ENCODE measurements at regions of chr6 and their contacts with region 1.

Region 1: DNA sequence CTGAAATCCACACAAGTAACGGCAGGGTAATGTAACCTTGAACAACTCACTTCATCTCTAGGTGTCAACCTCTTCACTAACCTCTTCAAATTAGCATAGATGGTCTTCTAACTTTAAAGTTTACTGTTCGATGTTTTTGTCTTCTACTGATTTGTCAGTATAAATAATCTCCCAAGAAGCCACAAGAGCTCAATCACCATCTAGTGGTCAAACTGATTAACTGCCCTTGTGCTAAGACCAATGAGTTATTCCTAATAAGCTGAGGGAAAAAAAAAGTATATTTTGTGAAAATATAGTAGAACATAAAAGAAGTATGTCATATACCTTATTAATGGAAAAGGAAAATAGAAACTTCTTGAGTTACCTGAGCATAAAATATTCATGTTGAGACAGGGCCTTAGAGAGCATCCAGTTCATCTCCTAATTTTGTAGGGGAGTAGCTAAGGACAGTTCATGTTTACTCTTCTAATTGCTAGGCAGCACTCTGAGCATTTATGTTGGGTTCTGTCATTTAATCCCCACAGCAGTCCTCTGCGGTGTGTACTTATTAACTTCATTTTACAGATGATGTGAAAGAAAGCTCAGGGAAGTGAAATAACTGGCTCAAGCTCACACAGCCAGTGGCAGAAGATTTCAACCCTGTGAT is 317.1 kb downstream of the ESR1 start:
- DNase-seq: peak in 1 of 42 donors; percentile 38

Region 2: DNA sequence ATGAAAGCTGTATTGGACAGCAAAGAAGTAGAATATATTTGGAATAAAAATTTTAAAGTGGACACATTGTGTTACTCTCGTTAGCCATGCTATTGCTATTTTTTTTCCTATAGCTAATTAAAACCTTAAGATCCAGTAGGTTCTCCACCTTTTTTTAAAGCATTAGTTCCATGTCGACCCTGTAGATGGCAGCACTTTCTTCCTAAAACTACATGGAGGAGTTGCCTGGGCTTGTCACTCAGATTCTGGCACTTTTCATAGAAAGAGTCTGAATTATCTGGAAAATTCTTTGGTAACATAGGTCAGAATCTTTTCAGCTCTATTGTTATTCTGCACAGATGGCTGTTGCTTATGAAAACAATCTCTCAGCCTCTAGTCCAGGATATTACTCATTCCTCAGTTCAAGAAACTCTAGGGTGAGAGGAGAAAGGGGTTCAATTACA is 359.1 kb before region 1 on chr6:
- intact Hi-C with region 1: loop called (anchors 5 kb)
- DNase-seq: peak in 25 of 42 donors; percentile 16 to 81 (median 54)

Region 3: DNA sequence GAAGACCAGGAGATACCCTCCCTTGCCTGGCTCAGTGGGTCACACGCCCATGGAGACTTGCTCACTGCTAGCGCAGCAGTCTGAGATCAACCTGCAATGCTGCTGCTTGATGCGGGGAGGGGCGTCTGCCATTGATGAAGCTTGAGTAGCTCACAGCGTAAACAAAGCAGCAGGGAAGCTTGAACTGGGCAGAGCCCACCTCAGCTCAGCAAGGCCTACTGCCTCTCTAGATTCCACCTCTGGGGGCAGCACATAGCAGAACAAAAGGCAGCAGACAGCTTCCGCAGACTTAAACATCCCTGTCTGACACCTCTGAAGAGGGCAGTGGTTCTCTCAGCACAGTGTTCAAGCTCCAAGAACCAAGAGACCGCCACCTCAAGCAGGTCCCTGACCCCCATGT is 45.7 kb before region 1 on chr6:
- intact Hi-C with region 1: no loop called
- DNase-seq: no peak

Region 4: DNA sequence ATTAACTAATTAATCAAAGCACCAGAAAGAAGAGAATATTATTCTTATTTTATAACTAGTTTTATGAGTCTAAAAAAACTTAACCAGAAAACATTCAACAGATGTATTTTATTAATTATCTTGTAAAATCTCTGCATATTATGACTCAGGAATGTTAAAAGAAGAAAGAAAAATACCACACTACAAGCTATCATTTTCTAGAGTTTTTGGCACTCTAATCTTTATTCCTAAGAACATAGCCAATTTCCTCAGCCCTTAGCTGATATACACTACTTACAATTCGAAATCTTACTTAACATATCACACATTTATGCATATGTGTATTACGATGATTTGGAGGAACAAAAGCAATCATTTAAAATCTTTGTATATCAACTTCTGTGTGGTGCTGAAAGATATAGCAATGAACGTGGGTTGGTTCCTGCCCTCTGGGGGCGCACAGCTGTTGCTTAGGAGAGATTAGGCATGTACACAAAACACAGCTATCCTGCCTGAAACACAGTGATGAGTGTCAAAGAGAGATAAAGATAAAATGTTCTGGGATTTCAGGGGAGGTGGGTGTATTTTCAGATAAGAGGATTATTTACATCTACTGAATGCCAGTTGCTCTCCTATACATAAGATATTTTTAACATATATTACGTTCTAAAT is 108.1 kb after region 1 on chr6:
- intact Hi-C with region 1: no loop called
- DNase-seq: no peak